CD8-positive, alpha-beta T cell (primary cell): ENCODE measurements at regions of chr15 and their contacts with region 1.

Region 1: DNA sequence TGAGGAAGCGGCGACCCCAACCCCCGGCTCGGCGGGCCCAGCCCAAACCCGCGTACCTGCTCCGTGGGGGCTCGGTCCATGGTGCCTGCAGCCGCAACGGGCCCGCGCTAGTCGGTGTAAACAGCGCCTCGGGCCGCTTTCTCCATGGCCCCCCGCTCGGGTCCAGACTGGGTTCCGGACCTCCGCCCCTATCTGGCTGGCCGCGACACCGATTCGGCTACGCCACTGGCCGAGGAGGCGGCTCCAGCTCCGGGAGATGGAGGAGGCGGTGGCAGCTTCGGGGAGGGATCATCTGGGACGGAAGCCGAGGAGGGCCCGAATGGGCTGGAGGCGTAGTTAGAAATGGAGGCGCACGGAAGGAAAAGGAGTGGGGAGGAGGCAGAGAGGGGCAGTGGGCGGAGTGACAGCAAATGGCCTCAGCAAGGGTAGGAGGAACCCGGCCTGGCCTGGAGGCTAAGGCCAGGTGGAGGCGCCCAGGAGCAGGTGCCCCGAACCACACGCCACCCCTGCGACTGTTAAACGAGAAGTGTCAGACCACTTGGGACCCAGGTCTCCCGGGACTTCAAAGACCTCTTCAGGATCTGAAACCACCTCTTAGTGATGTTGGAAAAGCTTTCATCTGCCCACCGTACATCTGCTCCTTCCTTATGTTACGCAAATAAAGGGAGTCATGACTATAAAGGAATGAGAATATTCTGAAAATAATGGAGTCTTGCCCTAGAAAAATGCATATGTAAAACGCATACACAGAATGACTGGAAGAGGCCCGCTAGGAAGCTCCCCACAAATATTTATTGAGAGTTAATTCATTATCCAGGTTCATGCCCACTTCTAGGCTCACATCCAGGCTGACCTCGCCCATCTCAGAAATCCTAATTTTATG is at the start of gene SECISBP2L:
- DNase-seq: peak; percentile 76 to 95 (median 89)
- ATAC-seq: peak; percentile 94
- H3K4me3 ChIP-seq: peak within 1 kb of the TSS; percentile 89 to 95
- H3K4me3 Mint-ChIP-seq: peak within 1 kb of the TSS; percentile 97
- H3K27ac ChIP-seq: peak within 1 kb of the TSS; percentile 64 to 66
- H3K27ac Mint-ChIP-seq: peak within 1 kb of the TSS; percentile 91
- H3K4me1 ChIP-seq: peaks cover 30% of the 10 kb centered on the region
- H3K4me1 Mint-ChIP-seq: peaks cover 32% of the 10 kb centered on the region
- H3K27me3 ChIP-seq: no peaks in the 10 kb centered on the region
- H3K27me3 Mint-ChIP-seq: no peaks in the 10 kb centered on the region
- CTCF ChIP-seq: no peak
- total RNA-seq, gene SECISBP2L: 54.8 to 61.2 TPM

Region 2: DNA sequence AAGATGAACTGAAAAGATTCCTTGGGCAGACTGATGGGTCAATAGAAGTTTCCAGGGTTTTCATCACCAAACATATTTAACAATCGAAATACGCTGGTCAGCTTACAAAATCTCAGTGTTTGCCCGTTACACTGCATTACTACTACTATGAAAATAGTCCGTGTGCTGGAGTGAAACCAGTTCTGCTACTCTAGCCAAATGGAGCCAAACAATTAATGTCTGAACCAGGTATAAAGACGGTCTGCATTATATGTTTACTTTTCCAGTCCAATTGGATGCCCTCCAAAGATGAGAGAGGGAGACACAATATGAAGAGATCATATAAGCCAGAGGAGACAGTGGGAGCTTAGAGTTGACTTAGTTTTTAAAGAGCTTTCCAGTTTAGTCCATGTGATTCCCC is 721.5 kb before region 1 on chr15:
- CTCF ChIA-PET with region 1: no interaction called
- POLR2A ChIA-PET with region 1: no interaction called
- intact Hi-C with region 1: loop called in 1 of 2 experiments (anchors 5 kb)
- DNase-seq: no peak
- ATAC-seq: no peak
- H3K4me3 ChIP-seq: no peak overlapping the region
- H3K4me3 Mint-ChIP-seq: no peak overlapping the region
- H3K27ac ChIP-seq: no peak overlapping the region
- H3K27ac Mint-ChIP-seq: no peak overlapping the region
- H3K4me1 ChIP-seq: no peaks in the 10 kb centered on the region
- H3K4me1 Mint-ChIP-seq: peaks cover 2% of the 10 kb centered on the region
- H3K27me3 ChIP-seq: peaks cover 0 to 3% of the 10 kb centered on the region in 2 experiments
- H3K27me3 Mint-ChIP-seq: no peaks in the 10 kb centered on the region
- CTCF ChIP-seq: no peak

Region 3: GRCh38 chr15:48877630-48878595 is 168.5 kb before region 1 on chr15 and contains the start of gene EID1:
- CTCF ChIA-PET with region 1: no interaction called
- POLR2A ChIA-PET with region 1: interaction called, 4 read pairs
- intact Hi-C with region 1: loop called (anchors 1 to 2 kb)
- DNase-seq: peak; percentile 86 to 97 (median 92)
- ATAC-seq: peak; percentile 94
- H3K4me3 ChIP-seq: peak within 1 kb of the TSS; percentile 76 to 91
- H3K4me3 Mint-ChIP-seq: peak within 1 kb of the TSS; percentile 94
- H3K27ac ChIP-seq: peak within 1 kb of the TSS; percentile 74 to 84
- H3K27ac Mint-ChIP-seq: peak within 1 kb of the TSS; percentile 98
- H3K4me1 ChIP-seq: peaks cover 11% of the 10 kb centered on the region
- H3K4me1 Mint-ChIP-seq: peaks cover 23% of the 10 kb centered on the region
- H3K27me3 ChIP-seq: peaks cover 0 to 2% of the 10 kb centered on the region in 2 experiments
- H3K27me3 Mint-ChIP-seq: peaks cover 6% of the 10 kb centered on the region
- CTCF ChIP-seq: no peak
- total RNA-seq, gene EID1: 34.5 to 34.7 TPM

Region 4: GRCh38 chr15:49155110-49155833 is 108.8 kb after region 1 on chr15 and contains the start of gene COPS2:
- CTCF ChIA-PET with region 1: no interaction called
- POLR2A ChIA-PET with region 1: interaction called, 8 read pairs
- intact Hi-C with region 1: loop called (anchors 1 to 2 kb)
- DNase-seq: peak; percentile 84 to 98 (median 93)
- ATAC-seq: peak; percentile 94
- H3K4me3 ChIP-seq: peak within 1 kb of the TSS; percentile 83 to 90
- H3K4me3 Mint-ChIP-seq: peak within 1 kb of the TSS; percentile 99
- H3K27ac ChIP-seq: peak within 1 kb of the TSS; percentile 83 to 92
- H3K27ac Mint-ChIP-seq: peak within 1 kb of the TSS; percentile 98
- H3K4me1 ChIP-seq: peaks cover 36% of the 10 kb centered on the region
- H3K4me1 Mint-ChIP-seq: peaks cover 55% of the 10 kb centered on the region
- H3K27me3 ChIP-seq: no peaks in the 10 kb centered on the region
- H3K27me3 Mint-ChIP-seq: no peaks in the 10 kb centered on the region
- CTCF ChIP-seq: no peak
- total RNA-seq, gene COPS2: 147 to 159 TPM

Region 5: DNA sequence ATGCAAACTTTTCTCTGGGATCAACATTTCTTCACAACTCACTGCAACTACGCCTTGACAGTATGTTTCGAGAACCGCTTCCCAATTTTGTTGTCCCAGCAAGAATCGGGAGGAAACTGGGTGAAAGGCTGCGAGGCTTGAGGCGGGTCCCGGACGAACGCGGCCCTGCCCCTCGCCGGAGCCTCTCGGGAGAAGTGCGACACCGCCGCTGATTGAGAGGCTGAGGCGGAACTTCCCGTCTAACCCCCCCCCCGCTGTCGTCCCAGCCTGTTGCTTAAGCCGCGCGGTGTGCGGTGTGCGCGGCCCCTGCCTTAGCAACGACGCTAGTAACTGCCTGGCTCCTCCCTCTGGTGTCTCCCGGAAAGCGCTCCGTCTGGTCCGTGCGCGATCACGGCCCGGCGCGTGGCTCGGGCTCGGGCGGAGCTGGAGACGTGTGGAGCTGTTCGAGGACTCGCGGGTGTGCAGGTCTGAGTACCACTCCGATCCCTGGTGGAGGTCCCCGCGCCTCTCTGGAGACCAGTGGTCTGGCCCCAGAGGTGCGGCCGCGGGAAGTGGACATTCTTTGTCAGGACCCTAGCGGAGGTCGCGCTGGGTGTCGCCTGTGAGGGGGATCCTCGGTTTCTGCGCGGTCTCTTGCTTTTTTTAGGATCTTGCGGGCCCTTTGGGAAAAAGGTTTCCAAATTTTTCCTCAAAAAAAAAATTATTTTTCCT is 574.4 kb after region 1 on chr15 and contains the starts of genes DTWD1 and FAM227B:
- CTCF ChIA-PET with region 1: no interaction called
- POLR2A ChIA-PET with region 1: no interaction called
- intact Hi-C with region 1: loop called (anchors 1 to 5 kb)
- DNase-seq: peak; percentile 85 to 98 (median 93)
- ATAC-seq: peak; percentile 97
- H3K4me3 ChIP-seq: peak within 1 kb of the TSS; percentile 71 to 83
- H3K4me3 Mint-ChIP-seq: peak within 1 kb of the TSS; percentile 94
- H3K27ac ChIP-seq: peak within 1 kb of the TSS; percentile 86 to 89
- H3K27ac Mint-ChIP-seq: peak within 1 kb of the TSS; percentile 99
- H3K4me1 ChIP-seq: peaks cover 28% of the 10 kb centered on the region
- H3K4me1 Mint-ChIP-seq: peaks cover 54% of the 10 kb centered on the region
- H3K27me3 ChIP-seq: no peaks in the 10 kb centered on the region
- H3K27me3 Mint-ChIP-seq: no peaks in the 10 kb centered on the region
- CTCF ChIP-seq: no peak
- total RNA-seq, gene DTWD1: 8.7 to 9.7 TPM
- total RNA-seq, gene FAM227B: 3.3 to 4.3 TPM

Region 6: GRCh38 chr15:50424066-50424890 is 1377.8 kb after region 1 on chr15 and contains the start of gene USP8:
- CTCF ChIA-PET with region 1: no interaction called
- POLR2A ChIA-PET with region 1: no interaction called
- intact Hi-C with region 1: loop called in 1 of 2 experiments (anchors 5 kb)
- DNase-seq: peak; percentile 86 to 97 (median 92)
- ATAC-seq: peak; percentile 96
- H3K4me3 ChIP-seq: peak within 1 kb of the TSS; percentile 84 to 95
- H3K4me3 Mint-ChIP-seq: peak within 1 kb of the TSS; percentile 98
- H3K27ac ChIP-seq: peak within 1 kb of the TSS; percentile 91 to 96
- H3K27ac Mint-ChIP-seq: peak within 1 kb of the TSS; percentile 99
- H3K4me1 ChIP-seq: peaks cover 27% of the 10 kb centered on the region
- H3K4me1 Mint-ChIP-seq: peaks cover 42% of the 10 kb centered on the region
- H3K27me3 ChIP-seq: no peaks in the 10 kb centered on the region
- H3K27me3 Mint-ChIP-seq: no peaks in the 10 kb centered on the region
- CTCF ChIP-seq: no peak
- total RNA-seq, gene USP8: 59.5 to 61.5 TPM

Region 7: GRCh38 chr15:50765195-50765973 is 1718.9 kb after region 1 on chr15 and contains the start of gene SPPL2A:
- CTCF ChIA-PET with region 1: no interaction called
- POLR2A ChIA-PET with region 1: no interaction called
- intact Hi-C with region 1: loop called in 1 of 2 experiments (anchors 10 kb)
- DNase-seq: peak; percentile 50 to 90 (median 76)
- ATAC-seq: peak; percentile 91
- H3K4me3 ChIP-seq: peak within 1 kb of the TSS; percentile 69 to 77
- H3K4me3 Mint-ChIP-seq: peak within 1 kb of the TSS; percentile 90
- H3K27ac ChIP-seq: peak within 1 kb of the TSS; percentile 63 to 90
- H3K27ac Mint-ChIP-seq: peak within 1 kb of the TSS; percentile 92
- H3K4me1 ChIP-seq: peaks cover 20% of the 10 kb centered on the region
- H3K4me1 Mint-ChIP-seq: peaks cover 45% of the 10 kb centered on the region
- H3K27me3 ChIP-seq: no peaks in the 10 kb centered on the region
- H3K27me3 Mint-ChIP-seq: no peaks in the 10 kb centered on the region
- CTCF ChIP-seq: no peak
- total RNA-seq, gene SPPL2A: 33.4 to 36.8 TPM